GM12878 (cell line): ENCODE measurements at regions of chr6 and their contacts with region 1.

Region 1: DNA sequence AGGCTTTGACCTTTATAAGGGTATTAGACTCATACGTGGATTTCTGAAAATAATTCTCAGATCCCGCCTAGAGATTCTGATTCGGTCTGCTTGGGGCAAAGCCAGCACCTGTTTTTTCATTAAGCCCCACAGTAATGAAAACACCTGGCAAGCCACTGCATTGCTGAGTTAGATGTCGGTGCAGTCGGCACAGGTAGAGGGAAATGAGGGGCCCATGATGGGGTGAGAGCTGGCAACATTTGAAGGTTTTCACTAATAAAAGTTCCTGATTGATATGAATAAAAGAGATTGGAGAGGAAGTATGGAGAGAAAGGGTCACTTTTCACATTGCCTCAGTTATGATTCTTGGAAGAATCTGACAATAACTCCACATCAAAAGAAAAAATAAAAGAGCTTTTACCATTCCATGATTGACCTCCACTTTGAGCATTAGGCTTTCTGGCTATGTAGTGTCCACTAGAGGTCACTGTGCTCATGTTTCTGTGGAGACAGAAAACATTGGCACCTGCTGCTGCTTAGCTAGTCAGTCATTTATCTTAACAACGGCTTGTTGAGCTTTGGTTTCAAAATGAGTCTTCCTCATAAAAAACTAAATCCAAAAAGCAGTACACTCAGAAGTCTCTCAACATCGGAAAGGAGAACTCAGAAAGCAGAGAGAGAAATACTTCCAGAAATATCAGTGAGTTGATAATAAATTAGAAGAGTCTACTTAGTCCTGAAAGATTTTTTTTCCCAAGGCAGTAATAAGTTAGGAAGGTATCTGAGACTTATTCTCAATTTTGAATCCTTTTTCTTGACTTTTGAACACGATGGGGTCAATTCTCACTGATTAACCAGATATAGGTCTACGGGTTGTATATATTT is 53.3 kb upstream of the KLHL31 start:
- DNase-seq: peak; percentile 51
- ATAC-seq: peak; percentile 99
- H3K4me3 ChIP-seq: no peak overlapping the region
- H3K27ac ChIP-seq: no peak overlapping the region
- H3K4me1 ChIP-seq: no peaks in the 10 kb centered on the region
- H3K27me3 ChIP-seq: no peaks in the 10 kb centered on the region; a peak in 2 of 4 replicates
- CTCF ChIP-seq: peak; percentile 73 to 88 (median 79)
- EP300 ChIP-seq: peak; percentile 24 to 25; a peak in 1 of 4 replicates
- POLR2A ChIP-seq: no peak
- RAD21 ChIP-seq: peak; percentile 49

Region 2: DNA sequence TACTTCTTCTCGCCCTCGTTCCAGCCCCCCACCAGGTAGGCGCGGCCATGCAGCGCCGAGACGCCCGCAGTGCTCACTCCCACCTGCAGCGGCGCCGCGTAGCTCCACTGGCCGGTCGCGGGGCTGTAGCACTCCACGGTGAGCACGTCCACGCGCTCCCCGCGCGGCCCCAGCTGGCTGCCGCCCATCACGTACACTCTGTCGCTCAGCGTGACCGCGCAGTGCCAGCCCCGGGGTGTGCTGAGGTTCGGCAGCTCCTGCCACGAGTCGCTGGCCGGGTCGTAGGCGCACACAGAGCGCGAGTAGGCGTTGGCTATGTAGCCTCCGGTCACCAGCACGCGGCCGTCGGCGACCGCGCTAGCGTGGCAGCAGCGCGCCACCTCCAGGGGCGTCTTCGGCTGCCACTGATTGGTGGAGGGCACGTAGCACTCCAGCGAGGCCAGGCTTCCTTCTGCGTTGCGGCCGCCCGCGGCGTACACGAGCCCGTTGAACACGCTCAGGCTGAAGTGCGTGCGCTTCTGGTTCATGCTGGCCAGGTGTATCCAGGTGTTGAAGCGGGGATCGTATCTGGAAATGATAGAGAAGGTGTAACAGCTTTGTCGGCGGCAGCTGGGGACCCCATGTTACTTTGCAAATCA is 66.9 kb before region 1 on chr6:
- CTCF ChIA-PET with region 1: interaction called, 11 read pairs
- POLR2A ChIA-PET with region 1: no interaction called
- RAD21 ChIA-PET with region 1: interaction called, 3 read pairs
- SMC1A ChIA-PET with region 1: interaction called, 3 read pairs
- in situ Hi-C with region 1: no loop called
- intact Hi-C with region 1: loop called (anchors 2 kb)
- DNase-seq: no peak
- ATAC-seq: peak; percentile 90
- H3K4me3 ChIP-seq: peak overlapping the region; percentile 57; the same call in 1 of the 2 replicates
- H3K27ac ChIP-seq: no peak overlapping the region
- H3K4me1 ChIP-seq: peaks cover 8% of the 10 kb centered on the region
- H3K27me3 ChIP-seq: peaks cover 9 to 16% of the 10 kb centered on the region in 2 experiments
- CTCF ChIP-seq: peak in 1 of 3 experiments; percentile 1; a peak in 2 of 6 replicates
- EP300 ChIP-seq: no peak
- POLR2A ChIP-seq: no peak
- RAD21 ChIP-seq: no peak

Region 3: GRCh38 chr6:53691667-53692133 is 27.1 kb before region 1 on chr6:
- CTCF ChIA-PET with region 1: interaction called, 13 read pairs
- POLR2A ChIA-PET with region 1: interaction called, 3 read pairs
- RAD21 ChIA-PET with region 1: interaction called, 5 read pairs
- SMC1A ChIA-PET with region 1: interaction called, 3 read pairs
- in situ Hi-C with region 1: no loop called
- intact Hi-C with region 1: no loop called
- DNase-seq: peak; percentile 25
- ATAC-seq: peak; percentile 88
- H3K4me3 ChIP-seq: no peak overlapping the region
- H3K27ac ChIP-seq: no peak overlapping the region
- H3K4me1 ChIP-seq: no peaks in the 10 kb centered on the region
- H3K27me3 ChIP-seq: no peaks in the 10 kb centered on the region; a peak in 1 of 4 replicates
- CTCF ChIP-seq: no peak
- EP300 ChIP-seq: no peak
- POLR2A ChIP-seq: no peak
- RAD21 ChIP-seq: no peak

Region 4: GRCh38 chr6:53703047-53703446 is 15.8 kb before region 1 on chr6:
- CTCF ChIA-PET with region 1: interaction called, 116 read pairs
- POLR2A ChIA-PET with region 1: no interaction called
- RAD21 ChIA-PET with region 1: no interaction called
- SMC1A ChIA-PET with region 1: interaction called, 3 read pairs
- in situ Hi-C with region 1: no loop called
- intact Hi-C with region 1: no loop called
- DNase-seq: no peak
- ATAC-seq: no peak
- H3K4me3 ChIP-seq: no peak overlapping the region
- H3K27ac ChIP-seq: no peak overlapping the region
- H3K4me1 ChIP-seq: no peaks in the 10 kb centered on the region
- H3K27me3 ChIP-seq: no peaks in the 10 kb centered on the region
- CTCF ChIP-seq: no peak
- EP300 ChIP-seq: no peak
- POLR2A ChIP-seq: no peak
- RAD21 ChIP-seq: no peak

Region 5: GRCh38 chr6:53734473-53735299 is 15.9 kb after region 1 on chr6:
- CTCF ChIA-PET with region 1: interaction called, 116 read pairs
- POLR2A ChIA-PET with region 1: no interaction called
- RAD21 ChIA-PET with region 1: interaction called, 12 read pairs
- SMC1A ChIA-PET with region 1: interaction called, 21 read pairs
- in situ Hi-C with region 1: no loop called
- intact Hi-C with region 1: no loop called
- DNase-seq: peak; percentile 26
- ATAC-seq: peak; percentile 83
- H3K4me3 ChIP-seq: no peak overlapping the region
- H3K27ac ChIP-seq: no peak overlapping the region
- H3K4me1 ChIP-seq: peaks cover 16% of the 10 kb centered on the region
- H3K27me3 ChIP-seq: no peaks in the 10 kb centered on the region
- CTCF ChIP-seq: peak; percentile 31 to 38 (median 32); a peak in 3 of 6 replicates
- EP300 ChIP-seq: no peak
- POLR2A ChIP-seq: no peak
- RAD21 ChIP-seq: no peak

Region 6: GRCh38 chr6:53956068-53956711 is 237.4 kb after region 1 on chr6:
- CTCF ChIA-PET with region 1: interaction called, 40 read pairs
- POLR2A ChIA-PET with region 1: no interaction called
- RAD21 ChIA-PET with region 1: interaction called, 31 read pairs
- SMC1A ChIA-PET with region 1: interaction called, 12 read pairs
- in situ Hi-C with region 1: no loop called
- intact Hi-C with region 1: no loop called
- DNase-seq: peak; percentile 8
- ATAC-seq: peak; percentile 94
- H3K4me3 ChIP-seq: no peak overlapping the region
- H3K27ac ChIP-seq: no peak overlapping the region
- H3K4me1 ChIP-seq: no peaks in the 10 kb centered on the region
- H3K27me3 ChIP-seq: no peaks in the 10 kb centered on the region; a peak in 1 of 4 replicates
- CTCF ChIP-seq: peak; percentile 36 to 58 (median 54); a peak in 5 of 6 replicates
- EP300 ChIP-seq: no peak
- POLR2A ChIP-seq: no peak
- RAD21 ChIP-seq: 0 out of 2 replicates have a peak, but pooled peaks have one; percentile 10